H1 (cell line): ENCODE measurements at regions of chr10 and their contacts with region 1.

Region 1: GRCh38 chr10:95229724-95230627 is 35.9 kb downstream of the ACSM6 start:
- DNase-seq: peak; percentile 66 to 84
- H3K4me3 ChIP-seq: peak overlapping the region; percentile 23 to 55 (median 28)
- H3K27ac ChIP-seq: peak overlapping the region; percentile 99
- H3K4me1 ChIP-seq: peaks cover 4 to 34% (median 23%) of the 10 kb centered on the region in 4 experiments; a peak in 6 of 7 replicates
- H3K27me3 ChIP-seq: no peaks in the 10 kb centered on the region
- CTCF ChIP-seq: no peak
- EP300 ChIP-seq: peak in 1 of 2 experiments; percentile 91; a peak in 1 of 3 replicates
- POLR2A ChIP-seq: peak in 1 of 2 experiments; percentile 67; a peak in 1 of 3 replicates
- RAD21 ChIP-seq: no peak

Region 2: DNA sequence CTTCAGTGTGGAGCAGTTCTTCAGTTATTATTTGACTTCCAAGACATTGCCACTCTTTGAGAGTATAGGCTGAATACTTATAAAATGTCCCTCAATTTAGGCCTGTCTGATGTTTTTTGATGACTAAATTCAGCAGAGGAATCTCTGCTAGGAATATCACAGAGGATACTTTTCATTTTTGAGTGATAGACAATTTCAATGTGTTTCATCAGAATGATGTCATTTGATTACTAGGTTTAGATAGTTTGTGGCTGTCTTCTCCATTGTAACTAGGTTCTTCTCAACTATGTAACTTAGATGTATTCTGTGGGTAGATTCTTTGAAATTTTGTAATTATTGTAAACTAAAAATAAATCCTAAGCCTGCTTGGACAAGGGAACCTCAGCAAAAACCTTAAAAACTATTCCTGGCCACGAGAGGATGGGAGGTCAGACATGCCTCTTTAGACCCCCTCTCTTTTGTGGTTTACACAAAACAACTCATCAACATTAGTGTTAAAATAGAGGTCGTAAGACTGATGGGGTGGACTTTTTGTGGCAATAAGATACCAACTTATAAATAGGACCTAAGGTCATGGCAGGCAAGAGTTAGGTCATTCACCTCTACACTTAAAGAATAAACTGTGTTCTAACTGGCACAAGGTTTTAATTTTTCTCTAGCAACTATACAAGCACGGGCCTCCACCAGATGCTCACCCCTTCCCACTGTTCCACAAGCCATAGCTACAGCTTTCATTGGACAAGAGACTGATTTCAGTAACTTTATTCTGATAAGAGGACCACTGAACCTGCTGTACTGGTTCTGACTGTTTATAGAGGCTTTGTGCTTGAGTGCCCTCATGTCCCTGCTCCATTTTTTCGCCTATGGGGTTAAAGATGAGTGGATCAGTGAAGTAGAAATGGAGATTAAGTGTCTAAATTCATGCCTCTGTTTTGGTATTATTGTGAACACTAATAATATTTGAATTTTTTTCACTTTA is 194.4 kb before region 1 on chr10:
- CTCF ChIA-PET with region 1: no interaction called
- POLR2A ChIA-PET with region 1: no interaction called
- DNase-seq: no peak
- H3K4me3 ChIP-seq: no peak overlapping the region
- H3K27ac ChIP-seq: no peak overlapping the region
- H3K4me1 ChIP-seq: no peaks in the 10 kb centered on the region
- H3K27me3 ChIP-seq: peaks cover 0 to 2% (median 0%) of the 10 kb centered on the region in 4 experiments; a peak in 1 of 7 replicates
- CTCF ChIP-seq: no peak
- EP300 ChIP-seq: no peak
- POLR2A ChIP-seq: no peak
- RAD21 ChIP-seq: no peak

Region 3: DNA sequence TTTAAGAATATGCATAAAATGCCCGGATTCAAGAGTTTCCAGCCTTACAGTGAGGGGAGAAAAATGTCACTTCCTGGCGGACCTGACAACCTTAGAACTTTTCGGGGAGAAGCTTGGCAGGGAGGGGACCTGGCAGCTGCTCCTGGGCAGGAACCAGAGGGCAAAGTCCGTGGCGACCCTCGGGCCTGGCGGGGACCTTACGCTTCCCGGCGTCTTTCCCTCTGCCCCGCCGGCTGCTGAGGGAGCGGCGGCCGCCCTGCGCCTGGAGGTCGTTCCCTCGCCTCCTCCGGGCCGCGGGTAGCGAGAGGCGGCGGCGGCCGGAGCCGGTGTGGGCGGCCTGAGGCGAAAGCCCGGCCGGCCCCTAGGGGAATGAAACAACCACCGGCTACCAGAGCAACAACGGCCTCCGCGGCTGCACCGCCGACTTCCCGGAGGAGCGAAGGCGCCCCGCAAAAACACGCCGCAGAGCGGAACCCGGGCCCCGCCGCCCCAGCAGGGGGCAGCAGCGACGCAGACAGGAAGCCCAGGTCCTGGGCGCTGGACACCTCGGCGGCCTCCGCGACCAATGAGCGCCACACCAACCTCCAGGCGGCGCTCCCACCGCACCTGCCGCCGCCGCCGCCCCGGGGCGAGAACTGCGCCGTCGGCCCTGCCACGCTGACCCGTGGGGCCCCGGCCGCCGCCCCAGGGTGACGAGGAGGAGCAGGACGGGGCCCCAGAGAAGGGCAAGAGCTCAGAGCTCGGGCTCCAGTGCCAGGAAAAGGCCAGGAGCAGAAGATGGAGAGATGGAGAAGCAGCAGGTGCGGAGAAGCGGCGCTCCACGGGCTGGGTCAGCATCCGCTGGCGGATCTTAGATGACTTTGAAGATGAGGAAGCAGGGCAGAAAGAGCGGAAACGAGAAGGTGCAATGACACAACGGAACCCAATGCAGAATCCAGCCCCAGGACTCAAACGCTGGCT is 46.4 kb before region 1 on chr10:
- CTCF ChIA-PET with region 1: interaction called, 5 read pairs
- POLR2A ChIA-PET with region 1: interaction called, 14 read pairs
- DNase-seq: peak; percentile 51 to 96
- H3K4me3 ChIP-seq: peak overlapping the region; percentile 45 to 67 (median 62)
- H3K27ac ChIP-seq: peak overlapping the region; percentile 71
- H3K4me1 ChIP-seq: peaks cover 0 to 4% (median 0%) of the 10 kb centered on the region in 4 experiments; a peak in 2 of 7 replicates
- H3K27me3 ChIP-seq: no peaks in the 10 kb centered on the region
- CTCF ChIP-seq: peak; percentile 84 to 98 (median 86)
- EP300 ChIP-seq: peak in 1 of 2 experiments; percentile 69; a peak in 1 of 3 replicates
- POLR2A ChIP-seq: peak in 1 of 2 experiments; percentile 67; a peak in 1 of 3 replicates
- RAD21 ChIP-seq: peak; percentile 76 to 83

Region 4: DNA sequence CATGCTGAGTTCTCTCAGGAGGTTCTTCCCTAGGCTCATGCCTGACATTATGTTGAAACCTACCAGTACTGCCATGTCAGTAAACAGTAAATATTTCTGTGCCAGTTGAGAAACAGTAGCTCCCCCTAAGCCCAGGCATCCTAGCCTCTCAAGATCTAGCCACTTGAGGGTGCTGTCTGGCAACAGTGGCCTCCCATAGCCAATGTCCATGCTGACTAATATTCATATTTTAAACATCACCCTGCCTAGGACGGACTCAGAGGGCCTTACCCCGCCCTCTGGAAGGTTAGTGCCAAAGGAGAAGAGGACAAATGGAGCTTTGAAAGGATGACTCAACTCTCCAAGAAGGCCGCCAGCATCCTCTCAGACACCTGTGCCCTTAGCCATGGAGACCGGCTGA is 28.2 kb before region 1 on chr10:
- CTCF ChIA-PET with region 1: interaction called, 5 read pairs
- POLR2A ChIA-PET with region 1: interaction called, 32 read pairs
- DNase-seq: no peak
- H3K4me3 ChIP-seq: no peak overlapping the region
- H3K27ac ChIP-seq: no peak overlapping the region
- H3K4me1 ChIP-seq: peaks cover 0 to 2% (median 0%) of the 10 kb centered on the region in 4 experiments; a peak in 1 of 7 replicates
- H3K27me3 ChIP-seq: no peaks in the 10 kb centered on the region
- CTCF ChIP-seq: peak; percentile 46 to 68 (median 57)
- EP300 ChIP-seq: no peak
- POLR2A ChIP-seq: no peak
- RAD21 ChIP-seq: peak; percentile 67 to 73

Region 5: DNA sequence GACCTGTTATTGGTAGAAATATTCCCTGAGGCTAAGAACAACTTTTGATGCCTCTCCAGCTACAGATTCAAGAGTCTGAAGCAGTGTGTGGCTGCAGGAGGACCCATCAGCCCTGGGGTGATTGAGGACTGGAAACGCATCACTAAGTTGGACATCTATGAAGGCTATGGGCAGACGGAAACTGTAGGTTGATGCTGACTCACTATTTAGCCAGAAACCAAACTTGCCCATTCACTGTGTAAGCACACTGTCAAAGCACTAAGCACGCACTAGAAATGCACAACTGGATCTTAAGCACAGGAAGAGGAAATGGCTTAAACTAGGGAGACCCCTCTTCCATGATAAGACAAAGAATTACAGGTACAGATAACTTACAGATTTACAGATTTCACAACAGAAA is 15.2 kb before region 1 on chr10:
- CTCF ChIA-PET with region 1: interaction called, 5 read pairs
- POLR2A ChIA-PET with region 1: interaction called, 51 read pairs
- DNase-seq: no peak
- H3K4me3 ChIP-seq: no peak overlapping the region
- H3K27ac ChIP-seq: no peak overlapping the region
- H3K4me1 ChIP-seq: no peaks in the 10 kb centered on the region
- H3K27me3 ChIP-seq: no peaks in the 10 kb centered on the region
- CTCF ChIP-seq: no peak
- EP300 ChIP-seq: no peak
- POLR2A ChIP-seq: no peak
- RAD21 ChIP-seq: no peak

Region 6: GRCh38 chr10:95279042-95279820 is 49.3 kb after region 1 on chr10:
- CTCF ChIA-PET with region 1: interaction called, 3 read pairs
- POLR2A ChIA-PET with region 1: interaction called, 11 read pairs
- DNase-seq: no peak
- H3K4me3 ChIP-seq: no peak overlapping the region
- H3K27ac ChIP-seq: no peak overlapping the region
- H3K4me1 ChIP-seq: peaks cover 0 to 17% (median 5%) of the 10 kb centered on the region in 4 experiments; a peak in 3 of 7 replicates
- H3K27me3 ChIP-seq: no peaks in the 10 kb centered on the region
- CTCF ChIP-seq: no peak
- EP300 ChIP-seq: no peak
- POLR2A ChIP-seq: no peak
- RAD21 ChIP-seq: no peak

Region 7: DNA sequence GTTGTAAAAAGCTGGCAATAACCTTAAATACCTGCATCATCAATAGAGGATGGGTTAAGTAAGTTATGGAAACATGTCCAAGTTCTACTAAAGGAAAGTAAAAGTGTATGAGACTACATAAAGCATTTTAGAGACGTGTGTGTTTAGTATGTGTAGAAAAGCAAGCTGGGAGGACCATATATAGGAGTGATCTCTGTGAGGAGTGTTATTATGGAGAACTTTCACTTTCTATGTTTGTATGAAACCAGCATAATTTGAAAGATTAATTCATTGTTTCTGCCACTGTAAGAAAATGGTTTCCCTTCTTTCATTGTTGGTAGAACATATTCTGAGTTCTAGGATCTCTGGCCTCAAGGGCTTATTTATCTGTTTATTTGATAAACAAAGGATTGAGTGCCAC is 80.0 kb after region 1 on chr10:
- CTCF ChIA-PET with region 1: no interaction called
- POLR2A ChIA-PET with region 1: no interaction called
- DNase-seq: no peak
- H3K4me3 ChIP-seq: no peak overlapping the region
- H3K27ac ChIP-seq: no peak overlapping the region
- H3K4me1 ChIP-seq: peaks cover 0 to 15% (median 5%) of the 10 kb centered on the region in 4 experiments; a peak in 6 of 7 replicates
- H3K27me3 ChIP-seq: no peaks in the 10 kb centered on the region
- CTCF ChIP-seq: no peak
- EP300 ChIP-seq: no peak
- POLR2A ChIP-seq: no peak
- RAD21 ChIP-seq: no peak

Region 8: DNA sequence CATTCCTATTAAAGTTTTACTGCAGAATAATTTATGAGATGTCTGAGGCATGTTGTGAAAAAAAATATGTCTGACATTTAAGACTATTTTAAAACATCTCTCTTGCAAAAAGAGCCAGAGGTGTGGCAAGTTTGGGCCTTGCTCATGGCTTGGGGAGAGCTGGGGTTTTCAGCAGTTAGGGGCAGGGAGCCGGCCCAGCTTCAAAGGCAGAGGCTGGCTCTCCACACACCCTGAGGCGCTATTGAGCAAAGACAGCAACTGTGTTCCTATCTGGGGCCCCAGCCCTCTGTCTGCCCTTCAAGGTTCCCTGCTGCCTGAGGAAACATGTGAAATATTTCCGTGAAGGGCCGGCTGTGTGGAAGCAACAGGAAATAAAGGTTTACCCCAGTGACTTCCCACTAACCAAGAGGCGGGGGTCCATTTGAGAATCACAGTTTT is 237.2 kb after region 1 on chr10:
- CTCF ChIA-PET with region 1: no interaction called
- POLR2A ChIA-PET with region 1: no interaction called
- DNase-seq: peak; percentile 47 to 65
- H3K4me3 ChIP-seq: no peak overlapping the region
- H3K27ac ChIP-seq: no peak overlapping the region
- H3K4me1 ChIP-seq: peaks cover 2 to 23% (median 12%) of the 10 kb centered on the region in 4 experiments; a peak in 5 of 7 replicates
- H3K27me3 ChIP-seq: no peaks in the 10 kb centered on the region
- CTCF ChIP-seq: peak; percentile 35 to 43 (median 39); a peak in 3 of 4 replicates
- EP300 ChIP-seq: no peak
- POLR2A ChIP-seq: no peak
- RAD21 ChIP-seq: peak; percentile 36 to 49